Natural killer cell (primary cell): ENCODE measurements at regions of chr17 and their contacts with region 1.

Region 1: DNA sequence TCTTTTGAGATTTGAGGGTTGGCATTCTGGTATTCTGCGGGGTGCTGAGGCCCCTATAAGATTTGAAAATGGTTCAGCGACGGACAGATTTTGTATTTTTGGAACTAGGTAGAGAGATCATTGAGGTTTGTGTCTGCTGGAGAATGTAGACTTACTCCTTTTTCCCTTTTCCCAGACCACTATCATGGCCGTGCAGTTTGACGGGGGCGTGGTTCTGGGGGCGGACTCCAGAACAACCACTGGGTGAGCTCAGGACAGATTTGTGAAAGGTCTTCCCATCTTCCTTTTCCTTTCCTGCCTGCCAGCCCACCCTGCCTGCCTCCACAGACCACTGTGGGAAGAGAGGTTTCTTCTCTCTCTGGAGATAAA is 573 bp downstream of the PSMB6 start:
- DNase-seq: peak in 1 of 2 donors; percentile 24
- ATAC-seq: no peak
- H3K4me3 ChIP-seq: peak overlapping the region; percentile 67
- H3K4me3 Mint-ChIP-seq: peak overlapping the region; percentile 100
- H3K27ac ChIP-seq: peak overlapping the region; percentile 63
- H3K27ac Mint-ChIP-seq: peak overlapping the region; percentile 94 to 96
- H3K4me1 ChIP-seq: peaks cover 17% of the 10 kb centered on the region
- H3K4me1 Mint-ChIP-seq: peaks cover 14% of the 10 kb centered on the region in 2 donors
- H3K27me3 ChIP-seq: no peaks in the 10 kb centered on the region
- H3K27me3 Mint-ChIP-seq: peaks cover 0 to 3% of the 10 kb centered on the region in 2 donors
- CTCF ChIP-seq: no peak

Region 2: DNA sequence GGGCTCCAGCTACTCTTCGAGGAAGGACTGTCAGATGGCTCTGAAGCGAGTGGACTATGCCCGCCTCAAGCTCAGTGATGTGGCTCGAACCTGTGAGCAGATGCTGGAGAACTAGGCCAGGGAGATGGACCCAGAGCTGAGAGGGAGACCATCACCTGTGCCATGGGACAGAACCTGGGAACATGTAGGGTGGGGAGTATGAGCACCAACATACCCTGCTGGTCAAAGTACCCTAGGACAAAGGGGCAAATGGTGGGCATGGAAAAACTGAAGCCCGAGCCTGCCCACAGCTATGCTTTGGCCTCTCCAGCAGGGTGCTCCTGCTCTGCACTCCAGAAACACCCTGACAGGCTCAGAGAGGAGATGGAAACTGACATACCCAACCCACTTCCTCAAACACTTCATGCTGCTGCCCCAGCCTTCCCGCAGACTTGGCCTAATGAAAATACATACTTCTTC is 63.4 kb before region 1 on chr17:
- intact Hi-C with region 1: loop called (anchors 1 kb)
- DNase-seq: no peak
- ATAC-seq: no peak
- H3K4me3 ChIP-seq: no peak overlapping the region
- H3K4me3 Mint-ChIP-seq: no peak overlapping the region
- H3K27ac ChIP-seq: no peak overlapping the region
- H3K27ac Mint-ChIP-seq: peak overlapping the region in 1 of 2 donors; percentile 38
- H3K4me1 ChIP-seq: peaks cover 36% of the 10 kb centered on the region
- H3K4me1 Mint-ChIP-seq: peaks cover 12 to 13% of the 10 kb centered on the region in 2 donors
- H3K27me3 ChIP-seq: no peaks in the 10 kb centered on the region
- H3K27me3 Mint-ChIP-seq: peaks cover 1 to 5% of the 10 kb centered on the region in 2 donors
- CTCF ChIP-seq: no peak

Region 3: GRCh38 chr17:4806777-4807604 is 10.5 kb after region 1 on chr17 and contains the start of gene PLD2:
- intact Hi-C with region 1: loop called (anchors 1 kb)
- DNase-seq: peak; percentile 84 to 92
- ATAC-seq: peak; percentile 99 to 100 (median 99)
- H3K4me3 ChIP-seq: peak within 1 kb of the TSS; percentile 50
- H3K4me3 Mint-ChIP-seq: peak within 1 kb of the TSS; percentile 85
- H3K27ac ChIP-seq: peak within 1 kb of the TSS; percentile 34
- H3K27ac Mint-ChIP-seq: peak within 1 kb of the TSS in 1 of 2 donors; percentile 11
- H3K4me1 ChIP-seq: peaks cover 10% of the 10 kb centered on the region
- H3K4me1 Mint-ChIP-seq: peaks cover 5 to 6% of the 10 kb centered on the region in 2 donors
- H3K27me3 ChIP-seq: no peaks in the 10 kb centered on the region
- H3K27me3 Mint-ChIP-seq: no peaks in the 10 kb centered on the region
- CTCF ChIP-seq: no peak
- total RNA-seq, gene PLD2: 20.8 to 22.7 (median 21.3) TPM

Region 4: DNA sequence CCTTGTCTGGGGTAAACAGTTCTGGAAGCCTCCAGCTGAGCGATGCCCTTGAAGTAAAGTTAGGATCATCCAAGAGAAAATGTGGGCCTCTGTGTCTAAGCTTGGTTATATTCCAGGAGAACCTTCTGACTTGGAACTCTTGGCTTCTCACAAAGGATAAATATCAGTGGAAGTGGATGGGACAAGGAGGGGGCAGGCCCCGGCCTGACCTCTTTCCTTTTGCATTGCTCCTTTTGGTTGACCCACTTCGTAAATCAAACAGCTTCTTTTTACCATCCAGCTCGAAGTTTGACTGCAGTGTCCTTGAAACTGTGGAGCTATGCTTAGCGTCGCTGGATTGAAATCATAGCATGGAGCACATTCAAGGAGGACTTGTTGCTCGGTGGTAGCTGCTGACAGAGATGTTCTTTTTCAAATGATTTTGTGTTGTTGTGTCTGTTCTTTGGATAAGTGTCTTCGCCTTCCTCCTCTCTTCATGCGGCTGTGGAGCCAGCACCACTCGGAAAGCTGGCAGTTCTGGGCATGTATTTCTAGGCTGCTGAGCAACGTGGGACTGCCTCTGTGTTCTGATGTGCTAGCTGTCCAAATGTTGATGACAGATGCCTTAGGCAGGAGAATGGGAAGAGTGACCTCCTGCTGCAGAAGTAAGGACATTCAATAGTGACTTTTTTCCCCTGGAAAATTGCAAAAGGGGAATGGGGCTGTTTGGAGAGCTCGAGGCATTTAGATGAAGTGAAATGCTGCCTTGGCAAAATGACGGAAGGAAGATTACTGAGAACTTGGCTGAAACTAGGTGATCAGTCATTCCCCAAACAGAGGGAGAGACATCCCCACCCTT is 41.2 kb after region 1 on chr17:
- intact Hi-C with region 1: loop called (anchors 5 kb)
- DNase-seq: no peak
- ATAC-seq: no peak
- H3K4me3 ChIP-seq: no peak overlapping the region
- H3K4me3 Mint-ChIP-seq: no peak overlapping the region
- H3K27ac ChIP-seq: no peak overlapping the region
- H3K27ac Mint-ChIP-seq: no peak overlapping the region
- H3K4me1 ChIP-seq: peaks cover 38% of the 10 kb centered on the region
- H3K4me1 Mint-ChIP-seq: peaks cover 51 to 64% of the 10 kb centered on the region in 2 donors
- H3K27me3 ChIP-seq: no peaks in the 10 kb centered on the region
- H3K27me3 Mint-ChIP-seq: no peaks in the 10 kb centered on the region
- CTCF ChIP-seq: no peak